ENCODE measurements at regions of chr1 and their contacts with region 1.

Region 1: GRCh38 chr1:208245185-208245705 is 1.1 kb upstream of the PLXNA2 start:
- DNase-seq: peak; percentile 92
- H3K4me3 ChIP-seq: peak overlapping the region in 1 of 3 experiments; percentile 40
- H3K27ac ChIP-seq: peak overlapping the region; percentile 70
- H3K4me1 ChIP-seq: peaks cover 23% of the 10 kb centered on the region
- H3K27me3 ChIP-seq: peaks cover 0 to 2% of the 10 kb centered on the region in 2 experiments
- CTCF ChIP-seq: peak; percentile 69 to 76
- POLR2A ChIP-seq: no peak

Region 2: GRCh38 chr1:207868774-207869721 is 376.2 kb before region 1 on chr1:
- CTCF ChIA-PET with region 1: no interaction called
- POLR2A ChIA-PET with region 1: no interaction called
- dilution Hi-C with region 1: no loop called
- intact Hi-C with region 1: loop called (anchors 5 kb)
- DNase-seq: peak; percentile 83
- H3K4me3 ChIP-seq: peak overlapping the region; percentile 64 to 67 (median 65)
- H3K27ac ChIP-seq: peak overlapping the region; percentile 52
- H3K4me1 ChIP-seq: peaks cover 17% of the 10 kb centered on the region
- H3K27me3 ChIP-seq: no peaks in the 10 kb centered on the region
- CTCF ChIP-seq: peak; percentile 73 to 95
- POLR2A ChIP-seq: peak; percentile 59

Region 3: GRCh38 chr1:208054485-208054884 is 190.8 kb before region 1 on chr1:
- CTCF ChIA-PET with region 1: interaction called, 20 read pairs
- POLR2A ChIA-PET with region 1: no interaction called
- dilution Hi-C with region 1: no loop called
- intact Hi-C with region 1: no loop called
- DNase-seq: no peak
- H3K4me3 ChIP-seq: no peak overlapping the region
- H3K27ac ChIP-seq: no peak overlapping the region
- H3K4me1 ChIP-seq: no peaks in the 10 kb centered on the region
- H3K27me3 ChIP-seq: no peaks in the 10 kb centered on the region
- CTCF ChIP-seq: no peak
- POLR2A ChIP-seq: no peak

Region 4: DNA sequence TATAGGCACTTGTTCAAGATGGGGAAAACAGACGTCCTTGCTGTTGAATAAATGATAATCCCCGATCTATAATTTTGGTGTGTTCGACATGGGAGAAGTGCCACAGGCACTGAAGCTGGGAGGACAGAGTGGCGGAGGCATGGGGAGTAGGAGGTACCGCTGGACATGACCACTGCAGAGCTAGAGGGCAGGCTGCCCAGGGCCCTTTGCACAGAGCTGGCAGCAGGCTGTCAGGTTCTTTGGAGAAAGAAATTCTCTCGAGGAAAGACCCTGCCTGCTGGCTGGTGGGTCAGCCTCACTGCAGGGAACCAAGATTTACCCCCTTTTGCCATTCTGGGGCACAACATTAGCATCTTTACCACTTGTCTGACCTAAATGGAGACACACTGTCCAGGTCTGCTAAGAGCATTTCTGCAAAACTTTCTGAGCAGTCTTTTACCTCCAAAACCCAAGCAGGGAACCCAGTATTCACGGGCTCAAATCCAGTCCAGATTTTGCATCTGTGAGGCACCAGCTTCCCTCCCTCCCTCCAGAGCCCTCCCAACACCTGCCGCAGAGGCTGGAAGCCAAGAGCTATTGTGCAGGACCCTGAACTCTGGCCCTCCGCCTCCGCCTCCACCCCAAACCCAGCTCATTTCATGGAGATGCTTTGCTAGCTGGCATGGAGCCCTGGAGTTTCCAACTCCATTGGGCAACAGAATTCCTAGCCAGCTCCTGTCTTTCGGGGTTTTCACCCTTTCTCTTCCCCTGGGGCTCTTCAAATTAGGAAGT is 143.4 kb before region 1 on chr1:
- CTCF ChIA-PET with region 1: interaction called, 28 read pairs
- POLR2A ChIA-PET with region 1: no interaction called
- dilution Hi-C with region 1: no loop called
- intact Hi-C with region 1: no loop called
- DNase-seq: peak; percentile 55
- H3K4me3 ChIP-seq: no peak overlapping the region
- H3K27ac ChIP-seq: no peak overlapping the region
- H3K4me1 ChIP-seq: no peaks in the 10 kb centered on the region
- H3K27me3 ChIP-seq: no peaks in the 10 kb centered on the region
- CTCF ChIP-seq: no peak
- POLR2A ChIP-seq: peak; percentile 23

Region 5: DNA sequence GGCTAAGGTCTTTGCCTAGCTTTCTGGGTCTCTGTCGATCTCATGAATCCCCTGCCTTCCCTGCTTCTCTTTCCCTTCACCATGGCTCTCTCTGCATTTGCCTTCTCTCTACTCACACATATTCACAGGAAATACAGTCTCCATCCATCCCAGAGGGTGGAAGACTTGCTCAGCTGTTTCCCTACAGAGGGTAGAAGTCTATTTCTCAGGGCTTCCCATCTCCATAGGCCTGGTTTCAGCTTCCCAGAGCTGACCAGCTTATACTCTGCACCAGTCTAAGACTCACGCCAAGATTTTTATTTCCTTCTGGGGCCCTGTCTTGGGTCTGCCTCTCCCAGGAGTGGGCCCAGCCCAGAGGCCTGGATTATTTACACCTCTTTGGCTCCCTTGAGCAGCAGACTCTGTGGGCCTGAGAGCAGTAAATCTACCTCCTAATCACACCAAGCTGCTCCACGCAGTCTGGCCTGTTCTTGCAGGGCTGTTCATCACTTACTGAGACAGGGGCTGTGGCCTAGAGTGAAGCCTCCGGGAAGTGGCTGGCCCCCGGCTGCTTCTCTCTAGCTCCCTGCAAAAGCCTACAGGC is 103.5 kb before region 1 on chr1:
- CTCF ChIA-PET with region 1: interaction called, 316 read pairs
- POLR2A ChIA-PET with region 1: no interaction called
- dilution Hi-C with region 1: loop called (anchors 25 kb)
- intact Hi-C with region 1: no loop called
- DNase-seq: no peak
- H3K4me3 ChIP-seq: no peak overlapping the region
- H3K27ac ChIP-seq: no peak overlapping the region
- H3K4me1 ChIP-seq: no peaks in the 10 kb centered on the region
- H3K27me3 ChIP-seq: no peaks in the 10 kb centered on the region
- CTCF ChIP-seq: no peak
- POLR2A ChIP-seq: no peak

Region 6: GRCh38 chr1:208207388-208208131 is 37.7 kb before region 1 on chr1:
- CTCF ChIA-PET with region 1: interaction called, 714 read pairs
- POLR2A ChIA-PET with region 1: interaction called, 8 read pairs
- dilution Hi-C with region 1: no loop called
- intact Hi-C with region 1: loop called (anchors 1 kb)
- DNase-seq: peak; percentile 97
- H3K4me3 ChIP-seq: no peak overlapping the region
- H3K27ac ChIP-seq: peak overlapping the region; percentile 94
- H3K4me1 ChIP-seq: peaks cover 94% of the 10 kb centered on the region
- H3K27me3 ChIP-seq: no peaks in the 10 kb centered on the region
- CTCF ChIP-seq: no peak
- POLR2A ChIP-seq: no peak

Region 7: GRCh38 chr1:208298593-208299269 is 53.5 kb after region 1 on chr1:
- CTCF ChIA-PET with region 1: no interaction called
- POLR2A ChIA-PET with region 1: no interaction called
- dilution Hi-C with region 1: no loop called
- intact Hi-C with region 1: no loop called
- DNase-seq: no peak
- H3K4me3 ChIP-seq: no peak overlapping the region
- H3K27ac ChIP-seq: no peak overlapping the region
- H3K4me1 ChIP-seq: no peaks in the 10 kb centered on the region
- H3K27me3 ChIP-seq: peaks cover 11 to 22% of the 10 kb centered on the region in 2 experiments
- CTCF ChIP-seq: no peak
- POLR2A ChIP-seq: no peak

Measured in endothelial cell of umbilical vein (primary cell).